ENCODE measurements at regions of chr2 and their contacts with region 1.

Region 1: GRCh38 chr2:175167792-175168563 is at the start of gene ATF2:
- DNase-seq: peak; percentile 98 to 100 (median 98)
- ATAC-seq: peak; percentile 88
- H3K4me3 ChIP-seq: peak within 1 kb of the TSS; percentile 69
- H3K27ac ChIP-seq: peak within 1 kb of the TSS; percentile 98
- H3K4me1 ChIP-seq: peaks cover 10 to 12% of the 10 kb centered on the region in 2 experiments
- H3K27me3 ChIP-seq: no peaks in the 10 kb centered on the region
- CTCF ChIP-seq: peak in 1 of 3 experiments; percentile 23; a peak in 2 of 6 replicates
- EP300 ChIP-seq: no peak; the same call in none of the 2 replicates
- POLR2A ChIP-seq: peak; percentile 97
- RAD21 ChIP-seq: no peak
- polyA plus RNA-seq, gene ATF2: 24.2 to 33.3 TPM

Region 2: DNA sequence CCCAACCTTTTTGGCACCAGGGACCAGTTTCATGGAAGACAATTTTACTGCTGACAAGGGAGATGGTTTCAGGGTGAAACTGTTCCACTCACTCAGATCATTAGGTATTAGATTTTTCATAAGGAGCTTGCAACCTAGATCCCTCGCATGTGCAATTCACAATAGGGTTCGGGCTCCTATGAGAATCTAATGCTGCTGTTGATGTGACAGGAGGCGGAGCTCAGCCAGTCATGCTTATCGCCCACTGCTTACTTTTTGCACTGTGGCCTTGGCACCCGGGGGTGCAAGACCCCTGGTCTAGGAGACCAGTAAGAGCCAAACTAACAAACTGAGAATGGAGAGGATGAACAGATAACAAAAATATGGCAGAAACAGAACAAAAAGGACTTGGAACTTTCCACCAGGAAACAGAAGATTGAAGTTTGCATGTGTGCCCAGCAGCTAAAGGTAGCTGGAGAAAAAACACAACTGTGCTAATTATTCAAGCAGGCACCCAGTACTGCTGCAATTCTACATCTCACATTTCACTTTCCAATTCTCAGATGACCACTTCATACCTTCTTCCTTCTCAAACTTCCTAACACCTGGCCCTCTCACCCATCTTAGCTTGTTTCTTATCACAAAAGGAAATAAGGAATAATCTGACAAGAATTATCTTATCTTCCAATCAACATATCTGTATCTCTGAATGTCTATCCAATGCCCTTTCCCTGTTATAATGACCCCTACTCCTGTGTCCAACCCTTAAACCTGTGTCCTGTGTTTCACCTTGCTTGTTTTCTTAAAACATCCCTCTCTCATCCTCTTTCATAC is 1227.6 kb before region 1 on chr2:
- CTCF ChIA-PET with region 1: no interaction called
- POLR2A ChIA-PET with region 1: no interaction called
- in situ Hi-C with region 1: loop called (anchors 10 kb)
- intact Hi-C with region 1: no loop called
- DNase-seq: no peak
- ATAC-seq: no peak
- H3K4me3 ChIP-seq: no peak overlapping the region
- H3K27ac ChIP-seq: no peak overlapping the region
- H3K4me1 ChIP-seq: peaks cover 17 to 39% of the 10 kb centered on the region in 2 experiments
- H3K27me3 ChIP-seq: no peaks in the 10 kb centered on the region
- CTCF ChIP-seq: no peak
- EP300 ChIP-seq: no peak
- POLR2A ChIP-seq: no peak
- RAD21 ChIP-seq: no peak

Region 3: GRCh38 chr2:175111200-175111657 is 56.7 kb before region 1 on chr2:
- CTCF ChIA-PET with region 1: no interaction called
- POLR2A ChIA-PET with region 1: interaction called, 3 read pairs
- in situ Hi-C with region 1: no loop called
- intact Hi-C with region 1: loop called (anchors 5 kb)
- DNase-seq: peak; percentile 37 to 63 (median 56)
- ATAC-seq: peak; percentile 90
- H3K4me3 ChIP-seq: no peak overlapping the region
- H3K27ac ChIP-seq: no peak overlapping the region
- H3K4me1 ChIP-seq: no peaks in the 10 kb centered on the region
- H3K27me3 ChIP-seq: no peaks in the 10 kb centered on the region
- CTCF ChIP-seq: peak; percentile 42 to 70 (median 62); a peak in 3 of 6 replicates
- EP300 ChIP-seq: no peak
- POLR2A ChIP-seq: no peak
- RAD21 ChIP-seq: peak; percentile 46 to 77; a peak in 3 of 4 replicates

Region 4: DNA sequence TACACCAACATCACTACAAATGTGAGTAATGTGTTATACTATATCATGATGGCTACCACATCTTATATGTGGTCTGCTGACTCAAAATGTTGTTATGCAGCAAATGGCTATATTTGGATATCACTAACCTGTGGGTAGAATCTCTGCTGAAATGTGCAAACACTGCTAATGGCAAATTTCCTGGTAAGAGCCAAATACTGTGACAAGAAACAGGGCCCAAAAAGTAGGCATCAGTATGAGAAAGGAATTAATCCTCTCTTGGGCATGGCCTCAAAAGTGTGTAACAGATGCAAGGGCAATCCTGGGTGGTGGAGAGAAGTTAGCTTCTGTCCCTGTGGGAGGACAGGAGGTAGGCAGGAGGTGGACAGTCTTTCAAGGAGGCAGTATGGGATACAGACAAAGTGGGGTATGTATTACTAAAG is 13.3 kb before region 1 on chr2:
- CTCF ChIA-PET with region 1: no interaction called
- POLR2A ChIA-PET with region 1: interaction called, 17 read pairs
- in situ Hi-C with region 1: no loop called
- intact Hi-C with region 1: no loop called
- DNase-seq: no peak
- ATAC-seq: no peak
- H3K4me3 ChIP-seq: no peak overlapping the region
- H3K27ac ChIP-seq: no peak overlapping the region
- H3K4me1 ChIP-seq: peaks cover 14 to 32% of the 10 kb centered on the region in 2 experiments
- H3K27me3 ChIP-seq: no peaks in the 10 kb centered on the region
- CTCF ChIP-seq: no peak
- EP300 ChIP-seq: no peak
- POLR2A ChIP-seq: no peak
- RAD21 ChIP-seq: no peak

Region 5: GRCh38 chr2:175181104-175181876 is 13.3 kb after region 1 on chr2 and contains the start of gene ATP5MC3:
- CTCF ChIA-PET with region 1: no interaction called
- POLR2A ChIA-PET with region 1: interaction called, 42 read pairs
- in situ Hi-C with region 1: no loop called
- intact Hi-C with region 1: loop called (anchors 1 kb)
- DNase-seq: peak; percentile 98 to 99 (median 98)
- ATAC-seq: peak; percentile 92
- H3K4me3 ChIP-seq: peak within 1 kb of the TSS; percentile 95
- H3K27ac ChIP-seq: peak within 1 kb of the TSS; percentile 98
- H3K4me1 ChIP-seq: peaks cover 9 to 23% of the 10 kb centered on the region in 2 experiments
- H3K27me3 ChIP-seq: no peaks in the 10 kb centered on the region
- CTCF ChIP-seq: peak in 1 of 3 experiments; percentile 48; a peak in 3 of 6 replicates
- EP300 ChIP-seq: peak; percentile 71
- POLR2A ChIP-seq: peak; percentile 99
- RAD21 ChIP-seq: no peak
- polyA plus RNA-seq, gene ATP5MC3: 1,166 to 1,324 TPM

Region 6: GRCh38 chr2:175227393-175227792 is 59.4 kb after region 1 on chr2:
- CTCF ChIA-PET with region 1: no interaction called
- POLR2A ChIA-PET with region 1: no interaction called
- in situ Hi-C with region 1: no loop called
- intact Hi-C with region 1: no loop called
- DNase-seq: no peak
- ATAC-seq: no peak
- H3K4me3 ChIP-seq: no peak overlapping the region
- H3K27ac ChIP-seq: no peak overlapping the region
- H3K4me1 ChIP-seq: no peaks in the 10 kb centered on the region
- H3K27me3 ChIP-seq: peaks cover 3 to 4% of the 10 kb centered on the region in 2 experiments; a peak in 2 of 5 replicates
- CTCF ChIP-seq: no peak
- EP300 ChIP-seq: no peak
- POLR2A ChIP-seq: no peak
- RAD21 ChIP-seq: no peak

Region 7: DNA sequence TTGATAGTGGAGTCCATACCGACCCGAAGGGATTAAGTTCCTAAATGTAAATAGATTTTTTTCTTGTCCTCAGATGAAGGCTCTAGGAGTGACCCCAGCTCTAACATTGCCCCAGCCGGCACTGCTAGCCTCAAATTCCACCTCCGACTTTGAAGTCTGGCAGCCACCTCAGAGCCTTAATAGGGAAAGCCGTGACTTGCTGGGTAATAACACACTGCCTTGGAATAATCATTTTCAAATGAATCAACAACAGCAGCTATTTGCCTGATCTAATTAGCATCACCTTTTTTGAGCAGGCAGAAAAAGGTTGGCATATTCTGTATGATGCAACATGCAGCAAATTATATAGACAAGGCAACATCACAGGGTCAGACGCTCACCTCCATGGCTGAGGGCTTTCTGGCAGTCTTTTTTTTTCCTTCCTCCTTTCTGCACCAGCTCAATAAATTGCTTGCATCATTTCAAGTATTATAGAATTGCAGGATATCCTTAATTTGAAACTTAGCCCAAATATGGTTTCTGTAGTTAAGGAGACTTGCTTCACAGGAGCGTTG is 290.0 kb after region 1 on chr2:
- CTCF ChIA-PET with region 1: no interaction called
- POLR2A ChIA-PET with region 1: no interaction called
- in situ Hi-C with region 1: no loop called
- intact Hi-C with region 1: no loop called
- DNase-seq: no peak
- ATAC-seq: 0 out of 3 replicates have a peak, but pooled peaks have one; percentile 32
- H3K4me3 ChIP-seq: no peak overlapping the region
- H3K27ac ChIP-seq: no peak overlapping the region
- H3K4me1 ChIP-seq: no peaks in the 10 kb centered on the region
- H3K27me3 ChIP-seq: no peaks in the 10 kb centered on the region
- CTCF ChIP-seq: no peak
- EP300 ChIP-seq: no peak
- POLR2A ChIP-seq: no peak
- RAD21 ChIP-seq: no peak

Region 8: DNA sequence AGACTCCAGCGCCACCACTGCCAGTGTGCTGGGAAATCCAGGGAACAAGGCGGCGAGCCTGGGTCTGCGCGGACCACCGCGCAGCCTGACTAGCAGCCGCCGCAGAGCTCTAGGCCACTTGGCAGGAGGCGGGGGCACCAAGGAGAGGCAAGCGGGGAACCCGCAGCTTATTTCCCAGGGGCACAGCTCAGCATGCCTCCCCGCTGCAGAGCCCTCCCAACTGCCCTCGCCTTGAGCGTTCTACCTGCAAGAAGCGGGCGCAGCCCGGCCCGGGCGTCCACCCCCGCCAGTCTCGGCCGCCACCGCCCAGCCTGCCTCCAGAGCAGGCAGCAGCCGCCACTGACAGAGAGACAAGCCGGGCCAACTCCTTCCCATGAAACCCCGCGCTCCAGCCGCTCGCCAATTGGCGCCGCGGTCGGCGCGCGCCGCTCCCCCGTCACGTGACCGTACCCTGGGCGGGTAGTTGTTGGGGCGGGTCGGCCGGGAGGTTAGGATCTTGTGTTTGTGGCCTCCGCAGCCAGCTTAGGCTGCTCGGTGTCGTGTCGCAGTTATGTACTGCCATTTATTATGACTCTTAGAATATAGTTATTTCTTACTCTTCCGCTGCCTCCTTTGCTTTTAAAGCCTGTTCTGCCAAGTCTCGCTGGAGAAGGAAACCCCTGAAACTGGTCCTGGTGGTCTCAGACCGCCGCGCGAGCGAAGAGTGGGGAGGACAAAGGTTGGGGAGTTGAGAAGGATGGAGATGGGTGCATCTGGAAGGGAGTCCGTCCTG is 834.1 kb after region 1 on chr2 and contains the start of gene LNPK:
- CTCF ChIA-PET with region 1: no interaction called
- POLR2A ChIA-PET with region 1: no interaction called
- in situ Hi-C with region 1: no loop called
- intact Hi-C with region 1: loop called (anchors 5 kb)
- DNase-seq: peak; percentile 96 to 98 (median 98)
- ATAC-seq: peak; percentile 93
- H3K4me3 ChIP-seq: peak within 1 kb of the TSS; percentile 72
- H3K27ac ChIP-seq: peak within 1 kb of the TSS; percentile 79
- H3K4me1 ChIP-seq: peaks cover 23 to 40% of the 10 kb centered on the region in 2 experiments; a peak in 4 of 5 replicates
- H3K27me3 ChIP-seq: no peaks in the 10 kb centered on the region
- CTCF ChIP-seq: no peak
- EP300 ChIP-seq: peak; percentile 40
- POLR2A ChIP-seq: peak; percentile 94
- RAD21 ChIP-seq: no peak
- polyA plus RNA-seq, gene LNPK: 6.4 to 8.7 TPM

Measured in K562 (cell line).